A673 (cell line): ENCODE measurements at regions of chr9 and their contacts with region 1.

Region 1: GRCh38 chr9:136671646-136672430 is 9.1 kb downstream of the EGFL7 start:
- DNase-seq: peak; percentile 64
- H3K4me3 ChIP-seq: no peak overlapping the region
- H3K27ac ChIP-seq: no peak overlapping the region
- H3K4me1 ChIP-seq: peaks cover 25% of the 10 kb centered on the region
- H3K27me3 ChIP-seq: no peaks in the 10 kb centered on the region
- CTCF ChIP-seq: peak; percentile 95

Region 2: GRCh38 chr9:135939351-135940265 is 732.2 kb before region 1 on chr9:
- CTCF ChIA-PET with region 1: no interaction called
- POLR2A ChIA-PET with region 1: no interaction called
- intact Hi-C with region 1: no loop called
- DNase-seq: no peak
- H3K4me3 ChIP-seq: no peak overlapping the region
- H3K27ac ChIP-seq: no peak overlapping the region
- H3K4me1 ChIP-seq: no peaks in the 10 kb centered on the region
- H3K27me3 ChIP-seq: no peaks in the 10 kb centered on the region
- CTCF ChIP-seq: no peak

Region 3: GRCh38 chr9:136185066-136185465 is 486.8 kb before region 1 on chr9:
- CTCF ChIA-PET with region 1: no interaction called
- POLR2A ChIA-PET with region 1: interaction called, 11 read pairs
- intact Hi-C with region 1: no loop called
- DNase-seq: no peak
- H3K4me3 ChIP-seq: no peak overlapping the region
- H3K27ac ChIP-seq: no peak overlapping the region
- H3K4me1 ChIP-seq: peaks cover 10% of the 10 kb centered on the region
- H3K27me3 ChIP-seq: no peaks in the 10 kb centered on the region
- CTCF ChIP-seq: no peak

Region 4: DNA sequence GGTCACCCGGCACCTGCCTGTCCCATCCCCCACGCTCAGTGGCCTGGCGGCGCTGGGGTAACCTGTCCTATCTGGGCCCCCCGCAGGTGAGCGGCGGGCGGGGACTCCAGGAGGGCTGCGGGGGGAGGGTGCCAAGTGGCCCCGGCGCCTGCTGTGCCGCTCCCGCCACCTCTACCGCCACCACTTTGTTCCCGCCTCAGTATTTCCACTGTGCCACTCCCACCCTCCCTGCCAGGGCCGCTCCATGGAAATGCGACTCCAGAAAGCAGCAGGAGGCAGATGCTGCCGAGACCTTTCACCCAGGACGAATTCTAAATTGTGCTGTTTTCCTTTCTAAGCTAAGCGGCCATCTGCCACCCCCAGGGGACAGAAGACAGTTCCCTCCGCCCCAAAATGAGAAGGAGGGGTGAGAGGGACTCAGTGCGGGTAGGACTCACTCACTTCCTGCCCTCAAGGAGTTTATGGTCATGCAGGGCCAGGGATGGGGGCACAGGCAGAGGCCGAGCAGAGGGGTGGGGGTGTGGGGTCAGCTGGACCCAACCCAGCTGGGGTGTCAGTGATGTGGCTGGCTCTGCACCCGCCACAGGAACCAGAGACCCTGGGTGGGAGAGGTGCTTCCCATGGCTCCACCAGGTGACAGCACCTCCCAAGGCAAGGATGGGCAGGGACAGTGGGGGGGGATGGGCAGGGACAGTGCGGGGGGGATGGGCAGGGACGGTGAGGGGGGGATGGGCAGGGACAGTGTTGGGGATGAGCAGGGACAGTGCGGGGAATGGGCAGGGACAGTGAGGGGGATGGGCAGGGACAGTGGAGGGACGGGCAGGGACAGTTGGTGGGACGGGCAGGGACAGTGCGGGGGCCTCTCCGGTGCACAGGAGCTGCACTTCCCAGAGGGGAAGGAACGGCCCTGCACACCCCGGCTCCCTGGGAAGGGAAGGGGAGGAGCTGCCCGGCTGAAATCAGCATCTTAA is 143.8 kb before region 1 on chr9:
- CTCF ChIA-PET with region 1: no interaction called
- POLR2A ChIA-PET with region 1: no interaction called
- intact Hi-C with region 1: no loop called
- DNase-seq: peak; percentile 49
- H3K4me3 ChIP-seq: no peak overlapping the region
- H3K27ac ChIP-seq: no peak overlapping the region
- H3K4me1 ChIP-seq: peaks cover 14% of the 10 kb centered on the region
- H3K27me3 ChIP-seq: no peaks in the 10 kb centered on the region
- CTCF ChIP-seq: no peak

Region 5: GRCh38 chr9:136585531-136586120 is 86.2 kb before region 1 on chr9:
- CTCF ChIA-PET with region 1: interaction called, 13 read pairs
- POLR2A ChIA-PET with region 1: no interaction called
- intact Hi-C with region 1: no loop called
- DNase-seq: no peak
- H3K4me3 ChIP-seq: no peak overlapping the region
- H3K27ac ChIP-seq: peak overlapping the region; percentile 4
- H3K4me1 ChIP-seq: peaks cover 31% of the 10 kb centered on the region
- H3K27me3 ChIP-seq: no peaks in the 10 kb centered on the region
- CTCF ChIP-seq: no peak

Region 6: DNA sequence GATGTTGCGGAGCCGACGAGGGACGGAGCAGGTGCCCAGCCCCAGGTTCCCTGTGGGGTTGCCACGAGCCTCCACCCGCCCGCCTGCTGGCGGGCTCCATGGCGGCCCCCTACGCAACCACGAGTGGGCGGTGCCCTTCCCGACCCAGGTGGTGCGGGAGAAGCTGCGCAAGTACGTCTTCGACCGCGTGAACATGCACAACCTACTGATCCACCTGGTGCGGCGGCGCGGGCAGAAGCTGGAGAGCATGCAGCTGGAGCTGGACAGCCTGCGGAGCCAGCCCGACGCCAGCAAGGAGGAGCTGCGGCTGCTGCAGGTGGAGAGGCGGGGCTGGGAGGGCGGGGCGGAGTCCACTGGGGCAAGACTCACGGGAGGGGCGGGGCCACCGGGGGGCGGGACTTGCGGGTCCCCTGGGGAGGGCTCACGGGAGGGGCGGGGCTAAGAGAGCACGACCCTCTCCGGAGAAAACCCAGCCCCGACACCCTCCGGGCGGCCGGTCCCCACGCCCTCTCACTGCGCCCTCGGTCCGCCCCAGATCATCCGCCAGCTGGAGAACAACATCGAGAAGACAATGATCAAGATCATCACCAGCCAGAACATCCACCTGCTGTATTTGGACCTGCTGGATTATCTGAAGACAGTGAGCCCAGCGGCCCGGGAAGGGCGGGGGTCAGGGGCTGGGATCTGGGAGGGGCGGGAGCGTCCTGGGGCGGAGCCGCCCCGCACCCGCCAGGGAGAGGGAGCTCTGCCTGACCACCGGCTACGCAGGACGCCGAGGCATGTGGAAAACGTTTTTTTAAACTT is 128.2 kb after region 1 on chr9:
- CTCF ChIA-PET with region 1: no interaction called
- POLR2A ChIA-PET with region 1: no interaction called
- intact Hi-C with region 1: no loop called
- DNase-seq: peak; percentile 86
- H3K4me3 ChIP-seq: peak overlapping the region; percentile 55
- H3K27ac ChIP-seq: no peak overlapping the region
- H3K4me1 ChIP-seq: peaks cover 22% of the 10 kb centered on the region
- H3K27me3 ChIP-seq: no peaks in the 10 kb centered on the region
- CTCF ChIP-seq: no peak